ENCODE measurements at regions of chr5 and their contacts with region 1.

Region 1: DNA sequence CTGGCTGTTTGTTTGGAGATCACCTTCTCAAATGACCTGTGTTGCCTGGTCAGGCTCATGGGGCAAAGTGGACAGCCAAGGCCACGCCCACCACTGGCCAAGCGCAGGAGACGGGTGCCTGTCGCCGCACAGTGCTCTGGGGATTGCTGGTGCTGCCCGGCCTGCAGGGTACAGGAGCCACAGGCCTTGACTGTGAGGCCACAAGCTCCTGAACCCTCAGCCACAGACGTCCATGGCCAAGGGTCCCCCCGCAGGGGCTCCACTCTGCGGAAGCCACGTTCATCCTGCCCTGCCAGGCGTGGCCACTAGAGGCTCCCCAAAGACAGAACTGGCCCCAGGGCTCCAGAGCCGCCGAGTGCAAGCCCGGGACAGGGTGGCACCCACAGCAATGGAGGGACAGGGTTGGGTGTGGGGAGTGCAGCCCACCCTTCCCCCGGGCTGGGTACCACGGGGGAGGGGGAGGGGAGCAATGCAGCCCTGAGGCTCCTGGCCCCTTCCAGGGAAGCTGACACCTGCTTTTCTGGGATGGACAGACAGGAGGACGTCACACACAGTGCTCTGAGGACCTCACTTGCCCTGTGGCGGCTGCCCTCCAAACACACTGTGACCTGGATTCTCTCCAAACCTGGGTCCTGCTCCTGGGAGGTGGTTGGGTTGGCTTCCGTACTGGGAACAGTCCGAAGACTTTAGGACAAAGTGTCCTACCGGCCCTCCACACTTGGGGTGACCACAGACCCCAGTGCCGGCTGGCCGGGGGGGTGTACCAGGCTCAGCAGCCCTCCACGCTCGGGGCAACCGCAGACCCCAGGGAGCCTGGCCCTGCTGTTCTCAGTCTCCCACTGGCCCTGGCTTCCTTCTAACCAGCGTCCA is 21.5 kb downstream of the TPPP start:
- DNase-seq: peak; percentile 88
- H3K4me3 ChIP-seq: peak overlapping the region in 1 of 8 donors; percentile 35
- H3K27ac ChIP-seq: no peak overlapping the region
- H3K4me1 ChIP-seq: peaks cover 17 to 43% (median 33%) of the 10 kb centered on the region in 6 donors
- H3K27me3 ChIP-seq: peaks cover 0 to 70% (median 15%) of the 10 kb centered on the region in 7 donors
- CTCF ChIP-seq: peak; percentile 64 to 91 (median 86)
- POLR2A ChIP-seq: no peak

Region 2: DNA sequence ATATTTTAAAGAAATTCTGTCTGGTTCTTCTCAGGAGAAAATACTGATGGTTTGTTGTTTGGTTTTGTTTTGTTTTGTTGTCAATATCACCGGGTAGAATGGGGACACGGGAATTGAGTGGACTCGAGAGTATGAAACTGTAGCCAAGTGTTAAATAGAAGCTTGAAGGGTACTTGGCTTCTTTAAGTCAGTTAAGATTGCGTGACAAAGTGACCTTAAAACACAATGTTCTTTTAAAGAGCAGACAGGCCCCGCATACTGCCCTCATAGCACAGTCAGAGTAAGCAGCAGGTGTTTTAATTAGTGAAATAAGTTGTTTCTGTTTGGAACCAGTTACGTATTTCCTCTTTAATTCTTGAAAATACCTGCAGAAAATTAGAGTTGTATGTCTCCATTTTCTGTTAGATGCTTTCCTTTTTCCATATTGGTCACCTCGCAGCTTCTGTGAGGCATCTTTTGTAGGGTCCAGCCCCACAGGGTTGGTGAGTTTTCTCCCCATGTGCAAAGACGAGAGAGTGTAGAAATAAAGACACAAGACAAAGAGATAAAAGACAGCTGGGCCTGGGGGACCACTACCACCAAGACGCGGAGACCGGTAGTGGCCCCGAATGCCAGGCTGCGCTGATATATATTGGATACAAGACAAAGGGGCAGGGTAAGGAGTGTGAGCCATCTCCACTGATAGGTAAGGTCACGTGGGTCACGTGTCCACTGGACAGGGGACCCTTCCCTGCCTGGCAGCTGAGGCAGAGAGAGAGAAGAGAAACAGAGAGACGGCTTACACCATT is 230.6 kb after region 1 on chr5:
- intact Hi-C with region 1: loop called (anchors 2 kb)
- DNase-seq: peak; percentile 55
- H3K4me3 ChIP-seq: no peak overlapping the region
- H3K27ac ChIP-seq: no peak overlapping the region
- H3K4me1 ChIP-seq: peaks cover 0 to 4% (median 0%) of the 10 kb centered on the region in 6 donors
- H3K27me3 ChIP-seq: no peaks in the 10 kb centered on the region
- CTCF ChIP-seq: no peak
- POLR2A ChIP-seq: no peak

Region 3: DNA sequence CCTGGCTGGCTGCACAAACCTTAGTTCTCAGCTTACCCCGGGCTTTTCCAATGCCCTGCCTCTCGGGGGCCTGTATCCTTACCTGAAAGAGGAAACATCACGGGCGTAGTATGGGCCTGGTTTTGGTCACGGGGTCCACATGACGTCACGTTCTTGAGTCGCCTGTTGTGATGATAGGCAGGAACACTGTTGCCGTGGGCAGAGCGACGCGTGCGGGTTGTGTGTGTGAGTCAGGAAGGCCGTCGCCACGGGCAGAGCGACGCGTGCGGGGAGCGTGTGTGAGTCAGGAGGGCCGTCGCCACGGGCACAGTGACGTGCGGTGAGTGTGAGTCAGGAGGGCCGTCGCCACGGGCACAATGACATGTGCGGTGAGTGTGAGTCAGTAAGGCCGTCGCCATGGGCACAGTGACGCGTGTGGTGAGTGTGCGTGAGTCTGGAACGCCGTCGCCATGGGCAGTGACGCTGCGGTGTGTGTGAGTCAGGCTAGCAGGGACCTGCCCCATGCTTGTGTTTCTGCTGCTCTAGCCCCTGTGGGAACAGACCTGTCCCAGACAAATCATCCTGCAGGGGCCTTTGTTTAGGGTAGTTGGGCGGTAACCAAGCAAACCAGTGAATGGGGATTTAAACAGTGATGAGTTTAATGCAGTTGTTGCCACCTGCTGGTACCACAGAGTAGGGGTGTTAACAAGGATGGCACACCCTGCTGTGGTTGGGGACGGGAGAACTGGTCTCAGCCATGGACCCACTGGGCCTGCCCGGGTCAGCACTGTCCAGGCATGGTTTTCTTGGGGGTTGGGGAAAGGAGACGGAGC is 240.8 kb after region 1 on chr5:
- intact Hi-C with region 1: no loop called
- DNase-seq: no peak
- H3K4me3 ChIP-seq: no peak overlapping the region
- H3K27ac ChIP-seq: no peak overlapping the region
- H3K4me1 ChIP-seq: no peaks in the 10 kb centered on the region
- H3K27me3 ChIP-seq: no peaks in the 10 kb centered on the region
- CTCF ChIP-seq: no peak
- POLR2A ChIP-seq: no peak

Measured in spleen (tissue), 13 donors.